ENCODE measurements at regions of chr20 and their contacts with region 1.

Region 1: DNA sequence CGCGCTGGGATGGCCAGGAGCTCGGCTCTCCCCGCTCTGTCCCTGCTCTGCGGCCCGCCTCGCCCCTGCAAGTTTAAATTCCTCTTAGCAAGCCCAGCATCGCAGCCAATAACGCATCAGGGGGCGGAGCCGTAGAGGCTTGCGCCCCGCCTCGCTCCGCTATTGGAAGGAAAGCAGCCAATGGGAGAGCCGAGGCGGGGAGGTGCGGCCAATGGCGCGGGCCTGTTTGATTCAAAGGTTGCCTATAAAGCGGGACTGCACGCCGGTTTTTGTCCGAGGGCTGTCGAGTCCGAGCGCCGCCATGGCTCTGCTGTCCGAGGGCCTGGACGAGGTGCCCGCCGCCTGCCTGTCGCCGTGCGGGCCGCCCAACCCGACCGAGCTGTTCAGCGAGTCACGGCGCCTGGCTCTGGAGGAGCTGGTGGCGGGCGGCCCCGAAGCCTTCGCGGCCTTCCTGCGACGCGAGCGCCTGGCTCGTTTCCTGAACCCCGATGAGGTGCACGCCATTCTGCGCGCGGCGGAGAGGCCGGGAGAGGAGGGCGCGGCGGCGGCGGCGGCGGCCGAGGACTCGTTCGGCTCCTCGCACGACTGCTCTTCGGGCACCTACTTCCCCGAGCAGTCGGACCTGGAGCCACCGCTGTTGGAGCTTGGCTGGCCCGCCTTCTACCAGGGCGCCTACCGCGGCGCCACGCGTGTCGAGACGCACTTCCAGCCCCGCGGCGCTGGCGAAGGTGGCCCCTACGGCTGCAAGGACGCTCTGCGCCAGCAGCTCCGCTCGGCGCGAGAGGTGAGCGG is at the start of gene FAM83D:
- DNase-seq: peak; percentile 95
- H3K4me3 ChIP-seq: peak within 1 kb of the TSS; percentile 78
- H3K27ac ChIP-seq: no peak within 1 kb of the TSS
- H3K27me3 ChIP-seq: peaks cover 8% of the 10 kb centered on the region
- CTCF ChIP-seq: no peak
- polyA plus RNA-seq, gene FAM83D: 10.5 and 14.9 TPM in 2 replicates

Region 2: DNA sequence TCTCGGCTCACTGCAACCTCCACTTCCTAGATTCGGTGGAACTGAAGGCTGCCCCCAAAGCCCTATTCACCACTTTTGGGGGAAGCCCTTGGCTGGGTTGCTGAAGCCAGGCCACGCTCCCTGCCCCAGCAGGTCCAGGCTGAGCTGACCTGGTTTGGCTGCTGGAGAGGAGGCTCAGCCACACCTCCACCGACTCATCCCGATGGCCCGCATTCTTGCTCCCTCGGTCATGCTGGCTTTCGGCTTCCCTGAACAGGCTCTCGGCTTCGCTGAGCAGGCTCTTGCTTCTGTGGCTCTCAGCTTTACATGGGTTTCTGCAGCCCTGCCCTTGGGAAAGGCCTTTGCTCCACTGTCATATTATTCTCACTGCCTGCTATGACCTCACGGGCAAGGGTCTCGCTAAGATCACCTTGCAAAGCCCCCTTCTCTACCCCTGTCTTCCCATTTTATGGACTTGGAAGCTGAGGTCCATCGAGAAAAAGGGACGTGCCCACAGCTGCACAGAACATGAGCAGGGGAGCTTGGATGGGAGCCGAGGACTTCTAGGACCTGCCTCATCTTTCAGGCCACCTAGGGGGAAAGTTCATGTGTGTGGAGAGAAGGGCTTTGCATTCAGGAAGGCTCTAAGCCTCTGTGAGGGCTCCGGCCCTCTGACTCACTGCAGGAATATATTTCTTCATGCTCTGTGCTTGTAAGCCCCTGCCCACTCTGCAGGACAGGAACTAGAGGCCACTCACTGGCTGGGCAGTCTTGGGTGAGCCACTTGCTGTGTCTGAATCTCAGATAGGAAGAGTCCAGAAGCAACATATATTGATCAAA is 309.1 kb before region 1 on chr20:
- CTCF ChIA-PET with region 1: no interaction called
- POLR2A ChIA-PET with region 1: no interaction called
- DNase-seq: no peak
- H3K4me3 ChIP-seq: no peak overlapping the region
- H3K27ac ChIP-seq: no peak overlapping the region
- H3K27me3 ChIP-seq: peaks cover 20% of the 10 kb centered on the region
- CTCF ChIP-seq: no peak

Region 3: DNA sequence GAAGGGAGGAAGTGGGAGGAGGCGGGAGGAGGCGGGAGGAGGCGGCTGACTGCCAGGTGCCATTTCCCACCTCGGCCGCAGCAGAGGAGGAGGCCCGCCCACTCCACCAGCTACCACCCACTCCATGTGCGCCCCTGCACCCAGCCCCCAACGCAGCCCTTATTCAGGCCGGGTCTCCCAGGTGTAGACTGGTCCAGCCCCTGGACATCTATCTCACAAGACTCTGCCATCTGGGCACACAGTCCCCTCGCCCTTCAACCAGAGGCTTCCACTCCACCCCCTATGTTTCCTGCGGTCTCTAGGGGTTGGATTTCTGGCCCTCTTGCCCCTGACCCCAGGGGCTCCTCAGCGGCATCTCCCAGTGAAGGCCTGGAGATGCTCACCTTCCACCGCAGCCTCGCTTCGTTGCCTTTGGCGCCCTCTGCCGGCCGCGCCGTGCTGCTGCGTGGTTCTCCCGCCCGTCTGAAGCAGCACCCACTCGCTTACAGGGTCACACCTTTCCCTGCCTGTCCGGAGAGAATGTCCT is 32.7 kb before region 1 on chr20:
- CTCF ChIA-PET with region 1: interaction called, 10 read pairs
- POLR2A ChIA-PET with region 1: no interaction called
- DNase-seq: no peak
- H3K4me3 ChIP-seq: no peak overlapping the region
- H3K27ac ChIP-seq: no peak overlapping the region
- H3K27me3 ChIP-seq: peaks cover 18% of the 10 kb centered on the region
- CTCF ChIP-seq: peak; percentile 90

Region 4: DNA sequence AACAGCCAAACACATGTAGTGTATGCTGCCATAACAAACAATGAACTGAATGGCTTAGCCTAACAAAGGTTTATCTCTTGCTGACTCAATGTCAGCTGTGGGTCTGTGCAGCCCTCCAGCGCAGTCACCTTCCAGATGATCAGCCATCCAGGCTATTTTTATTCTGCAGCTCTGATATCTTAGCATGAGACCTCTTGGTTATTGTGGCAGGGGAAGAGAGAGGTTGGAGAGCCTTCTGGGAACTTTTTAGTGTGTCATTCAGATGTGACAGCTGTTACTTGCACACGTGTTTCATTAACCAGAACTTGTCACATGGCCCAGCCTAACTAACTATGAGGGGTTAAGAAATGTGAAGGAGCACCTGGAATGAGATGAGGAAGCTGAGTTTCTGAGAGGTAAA is 238.3 kb after region 1 on chr20:
- CTCF ChIA-PET with region 1: no interaction called
- POLR2A ChIA-PET with region 1: no interaction called
- DNase-seq: no peak
- H3K4me3 ChIP-seq: no peak overlapping the region
- H3K27ac ChIP-seq: no peak overlapping the region
- H3K27me3 ChIP-seq: no peaks in the 10 kb centered on the region
- CTCF ChIP-seq: no peak

Measured in AG04450 (cell line).